AG04450 (cell line): ENCODE measurements at regions of chr20 and their contacts with region 1.

Region 1: DNA sequence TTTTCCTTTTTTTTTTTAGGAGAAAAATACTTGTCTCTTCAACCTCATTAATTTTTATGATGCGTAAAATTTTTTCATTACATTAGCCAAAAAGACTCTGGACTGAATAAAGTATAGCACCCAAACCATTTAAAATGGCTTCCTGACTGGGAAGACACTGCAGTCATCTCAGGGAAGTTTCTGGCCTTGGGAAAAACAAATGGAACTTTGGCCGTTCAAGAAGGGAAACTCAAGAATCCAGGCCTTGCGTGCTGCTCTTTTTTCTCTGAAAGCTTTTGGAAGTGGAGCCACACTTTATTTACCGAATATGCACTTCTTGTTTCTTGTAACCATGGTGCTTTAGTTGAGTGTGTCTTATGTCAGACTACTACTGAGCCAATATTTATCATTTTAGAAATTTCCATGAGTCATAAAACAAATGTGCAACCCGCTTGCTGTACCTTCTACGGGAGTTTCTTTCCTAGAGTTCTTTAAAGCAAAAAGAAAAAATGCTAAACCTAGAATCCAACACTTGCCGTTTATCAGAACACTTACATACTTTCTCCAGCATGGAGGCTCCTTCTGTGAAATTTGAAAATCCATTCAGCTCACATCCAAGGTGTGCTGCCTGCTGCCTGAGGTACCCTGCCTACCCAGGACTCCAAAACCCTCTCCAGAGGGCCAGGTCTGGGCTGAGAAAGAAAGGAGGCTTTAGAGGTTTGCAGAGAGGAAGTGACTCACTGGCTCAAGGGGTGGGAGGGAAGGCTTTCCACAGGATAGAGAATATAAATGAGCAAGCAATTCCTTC is 11.5 kb upstream of the DSTN start:
- DNase-seq: peak; percentile 59
- H3K4me3 ChIP-seq: peak overlapping the region; percentile 53
- H3K27ac ChIP-seq: peak overlapping the region; percentile 99
- H3K27me3 ChIP-seq: no peaks in the 10 kb centered on the region
- CTCF ChIP-seq: no peak

Region 2: DNA sequence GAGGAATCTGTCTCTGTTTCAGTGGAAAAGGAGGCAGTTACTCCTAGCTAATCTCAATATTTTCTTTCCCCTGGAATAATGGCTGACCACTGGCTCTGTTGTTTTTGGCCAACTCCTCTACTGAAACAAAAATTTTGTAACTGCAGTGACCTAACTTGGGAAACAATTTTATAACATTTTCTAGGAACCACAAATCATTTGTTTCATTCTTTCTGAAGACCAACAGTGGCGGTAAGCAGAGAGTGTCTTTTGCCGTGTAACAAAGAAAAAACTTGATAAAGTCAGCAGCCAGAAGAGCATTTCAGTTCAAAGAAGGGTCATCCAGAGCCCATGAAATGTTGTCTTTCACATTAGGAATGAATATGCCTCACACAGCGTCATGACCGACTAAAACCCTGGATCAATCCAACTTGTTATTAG is 15.3 kb before region 1 on chr20:
- CTCF ChIA-PET with region 1: interaction called, 4 read pairs
- POLR2A ChIA-PET with region 1: interaction called, 15 read pairs
- DNase-seq: no peak
- H3K4me3 ChIP-seq: no peak overlapping the region
- H3K27ac ChIP-seq: peak overlapping the region; percentile 82
- H3K27me3 ChIP-seq: no peaks in the 10 kb centered on the region
- CTCF ChIP-seq: no peak

Region 3: DNA sequence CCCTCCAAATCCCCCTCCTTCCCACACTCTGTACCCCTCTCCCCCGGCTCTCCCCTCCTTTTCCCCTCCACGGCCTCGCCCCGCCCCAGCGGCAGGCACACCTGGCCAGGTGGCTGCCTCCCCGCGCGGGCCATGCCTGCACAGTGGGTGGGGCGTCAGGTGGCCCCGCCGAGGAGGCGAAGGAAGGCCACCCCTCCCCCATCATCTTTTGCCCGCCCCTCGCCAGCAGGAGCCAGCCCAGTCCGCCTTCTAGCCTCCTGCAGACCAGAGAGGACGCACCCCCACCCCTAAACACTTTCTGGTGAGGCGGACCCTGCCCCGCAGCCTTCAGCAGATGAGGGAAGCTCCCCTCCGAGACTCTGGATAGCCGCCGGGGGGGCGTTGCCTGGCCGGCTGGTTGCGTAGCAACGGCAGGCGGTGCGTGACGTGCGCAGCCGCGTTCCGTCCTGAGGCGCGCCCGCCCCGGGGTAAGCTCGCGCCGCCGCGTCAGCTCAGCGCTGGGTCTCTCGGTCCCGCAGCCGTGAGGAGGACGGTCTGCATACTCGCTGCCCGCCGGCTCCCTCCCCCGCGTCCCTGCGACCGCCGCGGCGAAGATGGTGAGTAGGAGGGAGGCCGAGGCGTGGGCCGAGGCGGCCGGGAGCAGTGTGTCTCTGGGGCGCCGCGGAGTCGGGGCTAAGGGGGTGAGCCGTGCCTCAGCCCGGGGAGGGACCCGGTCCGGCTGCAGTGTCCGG is 11.4 kb after region 1 on chr20 and contains the start of gene DSTN:
- CTCF ChIA-PET with region 1: interaction called, 4 read pairs
- POLR2A ChIA-PET with region 1: interaction called, 28 read pairs
- DNase-seq: peak; percentile 88
- H3K4me3 ChIP-seq: peak within 1 kb of the TSS; percentile 87
- H3K27ac ChIP-seq: peak within 1 kb of the TSS; percentile 95
- H3K27me3 ChIP-seq: no peaks in the 10 kb centered on the region
- CTCF ChIP-seq: no peak
- polyA plus RNA-seq, gene DSTN: 318 and 414 TPM in 2 replicates

Region 4: GRCh38 chr20:17806739-17807441 is 248.5 kb after region 1 on chr20:
- CTCF ChIA-PET with region 1: no interaction called
- POLR2A ChIA-PET with region 1: interaction called, 12 read pairs
- DNase-seq: peak; percentile 54
- H3K4me3 ChIP-seq: no peak overlapping the region
- H3K27ac ChIP-seq: peak overlapping the region; percentile 71
- H3K27me3 ChIP-seq: no peaks in the 10 kb centered on the region
- CTCF ChIP-seq: no peak